Activated CD4-positive, alpha-beta memory T cell treated with anti-CD3 and anti-CD28 coated beads, Interleukin-2, amount 10 ng/mL, durations not matched to agents 7 days and 5 days (primary cell): ENCODE measurements at regions of chr10 and their contacts with region 1.

Region 1: DNA sequence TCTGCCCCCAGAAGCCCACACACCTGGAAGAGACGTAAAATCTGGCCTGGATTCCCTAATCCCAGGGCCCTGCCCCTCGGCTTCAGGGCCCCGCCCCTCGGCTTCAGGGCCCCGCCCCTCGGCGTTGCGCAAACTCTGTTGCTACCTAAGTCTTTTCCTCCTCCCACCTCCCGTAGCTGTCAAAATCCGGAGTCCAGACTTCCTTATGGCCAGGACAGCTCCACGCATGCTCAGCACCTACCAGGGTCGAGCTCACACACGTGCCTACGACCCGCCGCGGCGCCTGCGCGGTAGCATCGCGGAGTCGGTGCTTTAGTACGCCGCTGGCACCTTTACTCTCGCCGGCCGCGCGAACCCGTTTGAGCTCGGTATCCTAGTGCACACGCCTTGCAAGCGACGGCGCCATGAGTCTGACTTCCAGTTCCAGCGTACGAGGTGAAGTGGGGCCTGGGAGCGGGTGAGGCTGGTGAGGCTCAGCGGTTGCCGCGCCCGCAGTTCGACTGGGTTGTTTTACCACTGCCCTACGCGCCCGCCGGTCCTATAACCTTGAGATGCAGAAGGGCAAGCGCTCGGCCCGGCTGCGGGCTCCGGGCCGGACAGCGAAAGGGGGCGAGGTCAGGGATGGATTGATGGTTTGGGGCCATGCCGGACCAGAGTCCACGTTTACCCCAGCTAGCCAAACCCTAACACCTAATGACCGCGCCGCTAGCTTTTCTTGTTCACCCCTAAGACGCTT is at the start of gene CISD1:
- DNase-seq: peak; percentile 95
- H3K4me3 Mint-ChIP-seq: peak within 1 kb of the TSS; percentile 98
- H3K27ac Mint-ChIP-seq: peak within 1 kb of the TSS; percentile 93
- H3K4me1 Mint-ChIP-seq: peaks cover 28% of the 10 kb centered on the region
- H3K27me3 Mint-ChIP-seq: no peaks in the 10 kb centered on the region
- total RNA-seq, gene CISD1: 32.2 to 40.1 TPM

Region 2: GRCh38 chr10:58254644-58255043 is 14.4 kb before region 1 on chr10:
- CTCF ChIA-PET with region 1: no interaction called
- POLR2A ChIA-PET with region 1: no interaction called
- DNase-seq: no peak
- H3K4me3 Mint-ChIP-seq: no peak overlapping the region
- H3K27ac Mint-ChIP-seq: no peak overlapping the region
- H3K4me1 Mint-ChIP-seq: peaks cover 7% of the 10 kb centered on the region
- H3K27me3 Mint-ChIP-seq: no peaks in the 10 kb centered on the region

Region 3: DNA sequence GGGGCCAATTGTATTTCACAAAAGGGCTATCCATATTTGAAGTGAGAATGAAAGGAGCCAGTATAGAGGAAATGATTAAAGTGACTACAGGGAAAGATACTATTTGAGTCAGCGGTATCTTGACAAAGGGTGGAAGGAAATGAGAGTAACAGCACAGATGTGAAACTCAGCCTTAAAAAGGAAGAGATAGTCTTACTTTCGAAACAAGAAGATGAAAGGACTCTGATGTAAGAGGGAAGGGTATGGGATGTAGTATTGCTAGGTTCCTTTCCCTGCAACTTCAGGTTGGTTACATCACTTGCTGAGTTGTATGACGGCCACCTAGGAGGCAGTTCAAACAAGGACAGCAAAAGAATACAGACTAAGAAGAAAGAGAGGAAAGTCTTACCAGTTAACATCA is 13.6 kb after region 1 on chr10:
- CTCF ChIA-PET with region 1: interaction called, 4 read pairs
- POLR2A ChIA-PET with region 1: interaction called, 16 read pairs
- DNase-seq: peak; percentile 26
- H3K4me3 Mint-ChIP-seq: peak overlapping the region; percentile 58
- H3K27ac Mint-ChIP-seq: peak overlapping the region; percentile 82
- H3K4me1 Mint-ChIP-seq: peaks cover 37% of the 10 kb centered on the region
- H3K27me3 Mint-ChIP-seq: no peaks in the 10 kb centered on the region

Region 4: GRCh38 chr10:58291538-58292174 is 22.6 kb after region 1 on chr10:
- CTCF ChIA-PET with region 1: interaction called, 12 read pairs
- POLR2A ChIA-PET with region 1: interaction called, 13 read pairs
- DNase-seq: peak; percentile 33
- H3K4me3 Mint-ChIP-seq: no peak overlapping the region
- H3K27ac Mint-ChIP-seq: no peak overlapping the region
- H3K4me1 Mint-ChIP-seq: no peaks in the 10 kb centered on the region
- H3K27me3 Mint-ChIP-seq: no peaks in the 10 kb centered on the region

Region 5: GRCh38 chr10:58384999-58385783 is 116.2 kb after region 1 on chr10 and contains the start of gene TFAM:
- CTCF ChIA-PET with region 1: interaction called, 4 read pairs
- POLR2A ChIA-PET with region 1: interaction called, 16 read pairs
- DNase-seq: peak; percentile 96
- H3K4me3 Mint-ChIP-seq: peak within 1 kb of the TSS; percentile 89
- H3K27ac Mint-ChIP-seq: peak within 1 kb of the TSS; percentile 84
- H3K4me1 Mint-ChIP-seq: peaks cover 46% of the 10 kb centered on the region
- H3K27me3 Mint-ChIP-seq: no peaks in the 10 kb centered on the region
- total RNA-seq, gene TFAM: 46.1 to 48.0 TPM